Posterior vena cava (tissue), 2 donors: ENCODE measurements at regions of chr10 and their contacts with region 1.

Region 1: GRCh38 chr10:130127364-130128061 is 8.7 kb upstream of the GLRX3 start:
- DNase-seq: no peak

Region 2: DNA sequence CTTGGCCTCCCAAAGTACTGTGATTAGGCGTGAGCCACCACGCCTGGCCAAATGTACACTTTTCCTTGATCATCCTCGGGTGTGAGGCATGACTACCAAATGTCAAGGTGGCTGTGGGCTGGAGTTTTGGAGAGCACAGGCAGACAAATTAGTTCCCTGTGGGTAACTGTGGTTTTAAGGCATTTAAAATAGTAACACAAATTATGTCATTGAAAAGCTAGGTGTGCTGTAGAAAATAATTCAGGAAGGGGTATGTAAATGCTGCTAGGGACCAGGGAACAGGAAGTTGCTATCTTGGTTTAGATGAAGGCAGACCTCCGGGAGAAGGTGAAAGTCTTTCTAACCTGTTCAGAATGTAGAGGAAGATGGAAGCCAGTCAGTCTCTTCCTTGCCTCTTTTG is 18.5 kb after region 1 on chr10:
- intact Hi-C with region 1: loop called in 1 of 2 experiments (anchors 1 kb)
- DNase-seq: no peak

Region 3: GRCh38 chr10:130171196-130171595 is 43.7 kb after region 1 on chr10:
- intact Hi-C with region 1: no loop called
- DNase-seq: no peak